ENCODE measurements at regions of chr9 and their contacts with region 1.

Region 1: DNA sequence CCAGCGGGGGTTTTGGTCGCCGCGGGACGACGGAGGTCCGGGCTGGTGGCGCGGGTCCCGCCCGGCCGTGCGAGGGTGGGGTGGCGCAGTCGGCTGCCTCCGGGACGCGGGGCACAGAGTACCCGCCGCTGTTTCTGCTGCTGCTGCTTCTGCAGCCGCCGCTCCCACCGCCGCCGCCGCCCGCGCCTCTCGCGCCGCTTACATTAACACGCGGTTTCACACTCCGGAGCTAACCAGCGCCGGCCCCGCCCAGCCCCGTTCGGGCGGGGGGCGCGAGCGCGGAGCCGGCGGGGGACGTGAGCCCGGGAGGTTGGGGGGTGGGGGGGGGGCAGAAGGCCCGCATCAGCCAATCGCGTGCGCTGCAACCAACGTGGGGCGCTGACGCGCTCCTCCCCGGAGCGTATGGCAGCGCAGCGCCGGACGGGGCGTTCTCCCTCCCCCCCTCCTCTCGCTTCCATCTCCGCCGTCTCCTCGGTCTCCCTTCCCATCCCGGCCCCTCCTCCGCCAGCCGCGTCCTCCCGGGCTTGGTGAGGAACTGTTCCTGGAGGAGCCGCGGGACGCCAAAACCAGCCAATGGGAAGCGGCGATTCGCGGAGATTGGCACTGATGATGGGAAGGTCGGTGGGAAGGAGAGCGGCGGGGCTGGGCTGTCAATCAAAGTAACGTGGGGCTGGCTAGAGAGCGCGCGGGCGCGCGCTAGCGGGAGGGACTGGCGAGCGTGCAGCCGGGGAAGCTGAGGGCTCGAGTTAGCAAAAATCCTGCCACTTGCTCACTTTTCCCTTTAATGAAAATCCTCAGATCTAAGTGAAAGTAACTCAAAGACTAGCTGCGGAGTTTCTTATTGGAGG is at the start of gene TLE1:
- DNase-seq: peak; percentile 99 to 100 (median 100)
- H3K4me3 ChIP-seq: peak within 1 kb of the TSS; percentile 31 to 91 (median 64)
- H3K27ac ChIP-seq: peak within 1 kb of the TSS; percentile 62 to 97 (median 84)
- H3K4me1 ChIP-seq: peaks cover 17 to 22% of the 10 kb centered on the region in 2 donors
- H3K27me3 ChIP-seq: no peaks in the 10 kb centered on the region
- CTCF ChIP-seq: no peak
- POLR2A ChIP-seq: peak; percentile 73 to 88
- total RNA-seq, gene TLE1: 33.3 to 76.9 (median 53.6) TPM

Region 2: DNA sequence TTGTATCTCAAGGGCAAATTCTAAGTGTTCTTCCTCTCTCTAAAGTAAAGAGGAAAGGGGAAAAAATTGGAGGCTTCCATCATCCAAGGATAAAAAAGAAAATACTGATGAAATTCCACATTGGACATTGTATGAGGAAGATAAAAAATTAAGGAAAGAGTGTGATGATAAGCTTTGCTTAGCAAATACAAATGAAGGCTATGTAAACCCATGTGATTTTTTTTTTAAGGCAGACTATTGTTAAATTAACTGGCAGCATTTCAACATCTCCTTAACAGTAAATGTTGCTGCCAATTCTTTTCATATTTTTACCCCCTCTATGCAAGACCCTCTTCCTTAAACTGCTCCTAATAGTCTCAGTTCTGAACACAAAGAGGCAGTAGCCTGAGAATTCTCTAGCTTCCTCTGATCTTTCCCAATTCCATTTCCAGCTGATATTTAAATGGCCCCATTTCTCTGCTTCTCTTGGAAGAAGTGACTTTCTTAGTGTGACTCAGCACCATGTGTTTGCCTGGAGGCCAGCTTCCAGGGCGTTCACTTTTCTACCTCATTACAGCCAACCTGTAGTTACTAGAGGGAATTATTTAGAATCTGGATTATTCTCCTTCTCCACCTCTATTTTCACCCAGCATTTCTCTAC is 159.9 kb before region 1 on chr9:
- intact Hi-C with region 1: loop called (anchors 5 to 10 kb)
- DNase-seq: peak in 6 of 7 donors; percentile 23 to 59 (median 40)
- H3K4me3 ChIP-seq: no peak overlapping the region
- H3K27ac ChIP-seq: no peak overlapping the region
- H3K4me1 ChIP-seq: peaks cover 6 to 11% of the 10 kb centered on the region in 2 donors
- H3K27me3 ChIP-seq: no peaks in the 10 kb centered on the region
- CTCF ChIP-seq: no peak
- POLR2A ChIP-seq: no peak

Region 3: DNA sequence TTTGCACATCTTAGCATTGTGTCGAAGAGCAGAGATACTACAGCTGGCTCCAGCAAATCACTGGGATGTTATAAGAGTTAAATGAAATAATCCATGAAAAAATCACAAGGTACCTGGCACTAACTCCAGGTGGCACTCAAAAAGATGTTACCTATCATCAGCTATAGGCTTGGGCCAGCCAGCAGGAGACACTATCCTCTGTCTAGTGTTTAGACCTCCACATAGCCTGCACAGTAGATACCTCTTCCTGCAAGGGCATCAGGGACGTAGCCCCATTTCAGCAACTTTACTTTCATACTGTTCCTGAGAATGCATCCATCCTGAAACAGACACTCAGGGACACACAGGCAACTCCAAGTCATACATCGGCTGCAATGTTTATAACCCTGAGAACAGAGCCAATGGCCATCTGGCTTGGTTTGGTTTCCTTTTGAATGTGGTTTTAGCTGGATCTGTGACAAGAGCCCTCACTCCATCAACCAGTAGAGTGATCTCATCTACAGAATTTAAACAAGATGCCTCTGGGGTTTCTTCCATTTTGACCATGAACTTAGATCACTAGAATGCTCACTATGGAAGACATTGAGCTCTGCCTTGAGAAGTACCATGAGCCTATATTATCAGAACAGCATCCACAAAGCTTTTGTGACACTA is 70.1 kb before region 1 on chr9:
- intact Hi-C with region 1: loop called in 1 of 2 experiments (anchors 10 kb)
- DNase-seq: no peak
- H3K4me3 ChIP-seq: no peak overlapping the region
- H3K27ac ChIP-seq: no peak overlapping the region
- H3K4me1 ChIP-seq: no peaks in the 10 kb centered on the region
- H3K27me3 ChIP-seq: no peaks in the 10 kb centered on the region
- CTCF ChIP-seq: no peak
- POLR2A ChIP-seq: no peak

Region 4: DNA sequence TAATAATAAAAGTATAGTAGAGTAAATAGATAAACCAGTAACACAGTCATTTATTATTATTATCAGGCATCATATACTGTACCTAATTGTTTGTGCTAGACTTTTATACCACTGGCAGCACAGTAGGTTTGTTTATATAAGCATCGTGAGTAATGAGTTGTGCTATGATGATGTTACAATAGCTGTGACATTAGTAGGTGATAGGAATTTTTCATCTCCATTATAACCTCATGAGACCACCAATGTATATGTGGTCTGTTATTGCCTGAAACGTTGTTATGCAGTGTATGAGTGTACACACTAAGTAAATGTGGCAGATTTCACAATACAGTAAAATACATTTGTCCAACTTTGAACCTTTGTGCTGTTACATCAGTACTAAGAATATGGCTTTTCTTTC is 166.0 kb after region 1 on chr9:
- intact Hi-C with region 1: loop called in 1 of 2 experiments (anchors 10 kb)
- DNase-seq: no peak
- H3K4me3 ChIP-seq: no peak overlapping the region
- H3K27ac ChIP-seq: no peak overlapping the region
- H3K4me1 ChIP-seq: no peaks in the 10 kb centered on the region
- H3K27me3 ChIP-seq: no peaks in the 10 kb centered on the region
- CTCF ChIP-seq: no peak
- POLR2A ChIP-seq: no peak

Measured in adrenal gland (tissue), 19 donors.